PC-9 (cell line): ENCODE measurements at regions of chr1 and their contacts with region 1.

Region 1: GRCh38 chr1:227563324-227564201 is at the start of gene ZNF678:
- DNase-seq: peak; percentile 85 to 94
- H3K4me3 ChIP-seq: peak within 1 kb of the TSS; percentile 76
- H3K27ac ChIP-seq: peak within 1 kb of the TSS; percentile 78
- H3K4me1 ChIP-seq: peaks cover 4% of the 10 kb centered on the region; the same call in 1 of the 2 replicates
- H3K27me3 ChIP-seq: no peaks in the 10 kb centered on the region
- CTCF ChIP-seq: no peak
- total RNA-seq, gene ZNF678: 4.1 and 6.1 TPM in 2 replicates

Region 2: GRCh38 chr1:227542143-227543120 is 21.1 kb before region 1 on chr1:
- CTCF ChIA-PET with region 1: interaction called, 4 read pairs
- POLR2A ChIA-PET with region 1: interaction called, 5 read pairs
- intact Hi-C with region 1: loop called (anchors 2 kb)
- DNase-seq: peak; percentile 40 to 90
- H3K4me3 ChIP-seq: peak overlapping the region; percentile 54; the same call in 1 of the 2 replicates
- H3K27ac ChIP-seq: no peak overlapping the region
- H3K4me1 ChIP-seq: no peaks in the 10 kb centered on the region
- H3K27me3 ChIP-seq: no peaks in the 10 kb centered on the region
- CTCF ChIP-seq: peak; percentile 82

Region 3: DNA sequence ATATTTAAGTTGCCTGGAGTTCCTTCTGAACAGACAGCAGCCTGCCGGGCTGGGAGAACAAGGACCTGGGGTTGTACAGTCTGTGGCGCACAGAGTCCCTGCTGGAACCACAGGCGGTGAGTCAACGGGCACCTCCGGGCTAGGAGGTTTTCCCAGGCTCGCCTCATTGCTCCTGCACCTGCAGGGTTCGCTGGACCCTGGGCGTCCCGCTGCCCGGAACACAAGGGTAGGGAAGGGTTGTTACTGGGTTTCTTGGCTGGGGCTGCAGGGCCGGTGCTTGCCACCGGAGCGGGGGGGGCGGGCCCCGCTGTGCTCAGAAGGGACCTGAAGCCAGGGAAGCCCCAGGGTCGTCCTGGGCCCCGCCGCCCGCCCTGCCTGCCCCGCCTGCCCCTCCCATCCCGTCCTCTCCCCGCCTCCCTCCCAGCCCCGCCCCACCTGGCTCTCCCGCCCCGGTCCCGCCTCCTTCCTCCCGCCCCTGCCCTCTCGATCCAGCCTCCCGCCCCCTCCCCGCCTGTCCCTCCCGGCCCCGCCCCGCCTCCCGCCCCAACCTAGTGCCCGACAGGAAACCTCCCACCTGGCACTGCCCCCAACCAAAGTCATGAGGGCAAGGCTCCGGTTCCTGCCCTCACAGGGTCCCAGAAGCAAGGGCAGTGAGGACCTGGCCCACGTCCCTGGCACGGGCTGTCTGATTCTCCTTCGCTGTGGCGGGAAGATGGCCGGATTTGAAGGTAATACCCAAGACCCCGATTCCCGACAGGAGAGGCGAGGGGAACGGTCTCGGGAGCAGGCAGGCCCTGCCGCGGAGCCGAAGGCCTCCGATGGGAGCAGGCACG is 164.7 kb after region 1 on chr1:
- CTCF ChIA-PET with region 1: no interaction called
- POLR2A ChIA-PET with region 1: interaction called, 3 read pairs
- intact Hi-C with region 1: loop called (anchors 1 kb)
- DNase-seq: peak; percentile 86 to 89
- H3K4me3 ChIP-seq: peak overlapping the region; percentile 62
- H3K27ac ChIP-seq: 0 out of 2 replicates have a peak overlapping the region, but pooled peaks have one; percentile 10
- H3K4me1 ChIP-seq: peaks cover 6% of the 10 kb centered on the region
- H3K27me3 ChIP-seq: no peaks in the 10 kb centered on the region
- CTCF ChIP-seq: no peak